ENCODE measurements at regions of chr11 and their contacts with region 1.

Region 1: GRCh38 chr11:75147875-75148263 is 3.0 kb upstream of the SLCO2B1 start:
- DNase-seq: peak; percentile 30 to 31
- ATAC-seq: no peak
- H3K4me3 ChIP-seq: no peak overlapping the region
- H3K27ac ChIP-seq: no peak overlapping the region
- H3K4me1 ChIP-seq: peaks cover 0 to 3% of the 10 kb centered on the region in 2 donors
- H3K27me3 ChIP-seq: no peaks in the 10 kb centered on the region
- CTCF ChIP-seq: no peak
- POLR2A ChIP-seq: no peak

Region 2: DNA sequence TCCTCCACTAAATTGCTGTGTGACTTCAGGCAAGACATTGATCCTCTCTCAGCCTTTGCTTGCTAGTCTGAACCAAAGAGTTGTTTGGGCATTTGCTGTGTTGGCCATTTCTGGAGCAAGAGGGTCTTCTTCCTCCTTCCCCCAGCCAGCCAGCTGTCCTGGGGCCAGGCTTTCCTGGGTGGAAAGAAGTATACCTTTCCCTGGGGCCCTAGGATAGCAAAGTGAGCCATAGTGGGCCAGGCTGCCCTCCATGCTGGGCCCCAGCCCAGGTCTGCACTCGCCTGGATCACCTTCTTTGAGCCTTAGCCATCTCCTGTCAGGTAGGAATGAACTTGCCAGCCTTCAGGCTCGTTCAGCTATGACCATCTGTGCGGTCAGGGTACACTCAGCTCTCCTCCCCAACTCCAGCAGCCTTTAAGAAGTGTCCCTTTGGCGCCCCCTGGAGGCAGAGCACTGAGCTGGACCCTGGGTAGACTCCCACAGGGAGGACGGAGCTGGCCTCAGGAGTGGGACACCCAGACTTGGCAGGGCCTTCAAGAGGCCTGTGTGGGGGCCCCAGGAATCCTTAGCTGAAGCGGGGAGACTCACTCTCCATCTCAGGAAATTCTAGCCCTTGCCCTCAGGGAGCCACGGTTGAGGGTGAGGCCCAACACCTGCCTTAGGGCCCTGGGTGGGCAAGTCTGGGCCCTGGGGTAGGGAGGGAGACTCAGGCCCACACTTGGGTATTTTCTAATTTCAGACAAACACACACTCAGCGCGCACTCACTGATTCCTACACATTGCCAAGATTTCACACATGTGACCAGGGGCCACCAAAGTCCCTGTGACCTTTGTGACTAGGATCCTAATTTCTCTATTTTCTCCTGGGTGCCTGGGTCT is 57.1 kb after region 1 on chr11:
- in situ Hi-C with region 1: loop called in 3 of 4 experiments (anchors 5 kb)
- intact Hi-C with region 1: loop called (anchors 1 kb)
- DNase-seq: peak; percentile 49 to 68
- ATAC-seq: peak; percentile 81 to 92
- H3K4me3 ChIP-seq: no peak overlapping the region
- H3K27ac ChIP-seq: no peak overlapping the region
- H3K4me1 ChIP-seq: no peaks in the 10 kb centered on the region
- H3K27me3 ChIP-seq: no peaks in the 10 kb centered on the region
- CTCF ChIP-seq: peak; percentile 60 to 87 (median 82)
- POLR2A ChIP-seq: no peak

Region 3: GRCh38 chr11:75248690-75249268 is 100.9 kb after region 1 on chr11:
- in situ Hi-C with region 1: loop called in 3 of 4 experiments (anchors 5 kb)
- intact Hi-C with region 1: loop called (anchors 1 kb)
- DNase-seq: peak; percentile 63 to 76
- ATAC-seq: peak; percentile 91 to 99
- H3K4me3 ChIP-seq: no peak overlapping the region
- H3K27ac ChIP-seq: no peak overlapping the region
- H3K4me1 ChIP-seq: no peaks in the 10 kb centered on the region
- H3K27me3 ChIP-seq: peaks cover 0 to 6% (median 0%) of the 10 kb centered on the region in 3 donors
- CTCF ChIP-seq: peak; percentile 87 to 97 (median 94)
- POLR2A ChIP-seq: no peak